PC-3 (cell line): ENCODE measurements at regions of chr10 and their contacts with region 1.

Region 1: GRCh38 chr10:54402576-54402975 is 398.5 kb downstream of the PCDH15 start:
- DNase-seq: peak; percentile 76
- ATAC-seq: peak; percentile 76
- H3K4me3 ChIP-seq: no peak overlapping the region
- H3K27ac ChIP-seq: no peak overlapping the region
- H3K4me1 ChIP-seq: no peaks in the 10 kb centered on the region
- H3K27me3 ChIP-seq: no peaks in the 10 kb centered on the region
- CTCF ChIP-seq: peak; percentile 92

Region 2: GRCh38 chr10:53314876-53315275 is 1087.7 kb before region 1 on chr10:
- CTCF ChIA-PET with region 1: no interaction called
- POLR2A ChIA-PET with region 1: no interaction called
- intact Hi-C with region 1: loop called (anchors 2 kb)
- DNase-seq: peak; percentile 100
- ATAC-seq: peak; percentile 97
- H3K4me3 ChIP-seq: no peak overlapping the region
- H3K27ac ChIP-seq: no peak overlapping the region
- H3K4me1 ChIP-seq: peaks cover 14% of the 10 kb centered on the region
- H3K27me3 ChIP-seq: no peaks in the 10 kb centered on the region
- CTCF ChIP-seq: no peak

Region 3: GRCh38 chr10:53886325-53887300 is 516.0 kb before region 1 on chr10:
- CTCF ChIA-PET with region 1: no interaction called
- POLR2A ChIA-PET with region 1: interaction called, 37 read pairs
- intact Hi-C with region 1: no loop called
- DNase-seq: peak; percentile 42
- ATAC-seq: peak; percentile 94
- H3K4me3 ChIP-seq: peak overlapping the region; percentile 2; the same call in 1 of the 2 replicates
- H3K27ac ChIP-seq: no peak overlapping the region
- H3K4me1 ChIP-seq: no peaks in the 10 kb centered on the region
- H3K27me3 ChIP-seq: no peaks in the 10 kb centered on the region
- CTCF ChIP-seq: 0 out of 2 replicates have a peak, but pooled peaks have one; percentile 17

Region 4: DNA sequence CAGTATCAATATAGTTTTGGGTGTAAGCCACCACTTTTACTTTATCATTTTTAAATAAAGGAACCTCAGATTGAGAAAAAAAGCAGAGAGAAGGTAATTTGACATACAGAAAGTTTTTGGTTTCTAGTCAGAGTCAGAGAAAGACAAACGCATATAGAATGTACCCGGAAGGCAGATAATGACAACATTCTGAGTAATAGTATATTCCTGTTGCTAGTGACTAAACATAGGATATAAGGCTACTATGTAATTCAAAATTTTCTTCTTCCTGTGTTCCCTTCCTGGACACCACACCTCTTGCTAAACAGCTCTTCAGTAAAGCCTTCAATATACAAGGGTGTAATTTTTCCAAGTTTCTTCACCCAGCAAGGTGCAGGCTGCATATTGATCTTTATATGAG is 199.2 kb before region 1 on chr10:
- CTCF ChIA-PET with region 1: no interaction called
- POLR2A ChIA-PET with region 1: no interaction called
- intact Hi-C with region 1: loop called (anchors 2 kb)
- DNase-seq: peak; percentile 83
- ATAC-seq: peak; percentile 95
- H3K4me3 ChIP-seq: peak overlapping the region; percentile 27
- H3K27ac ChIP-seq: peak overlapping the region; percentile 70
- H3K4me1 ChIP-seq: peaks cover 20% of the 10 kb centered on the region
- H3K27me3 ChIP-seq: no peaks in the 10 kb centered on the region
- CTCF ChIP-seq: no peak

Region 5: GRCh38 chr10:55263327-55263726 is 860.8 kb after region 1 on chr10:
- CTCF ChIA-PET with region 1: no interaction called
- POLR2A ChIA-PET with region 1: no interaction called
- intact Hi-C with region 1: loop called (anchors 10 kb)
- DNase-seq: no peak
- ATAC-seq: peak; percentile 20
- H3K4me3 ChIP-seq: no peak overlapping the region
- H3K27ac ChIP-seq: no peak overlapping the region
- H3K4me1 ChIP-seq: no peaks in the 10 kb centered on the region
- H3K27me3 ChIP-seq: no peaks in the 10 kb centered on the region
- CTCF ChIP-seq: no peak